Activated CD4-positive, alpha-beta memory T cell treated with anti-CD3 and anti-CD28 coated beads for 36 hours (primary cell): ENCODE measurements at regions of chr2 and their contacts with region 1.

Region 1: DNA sequence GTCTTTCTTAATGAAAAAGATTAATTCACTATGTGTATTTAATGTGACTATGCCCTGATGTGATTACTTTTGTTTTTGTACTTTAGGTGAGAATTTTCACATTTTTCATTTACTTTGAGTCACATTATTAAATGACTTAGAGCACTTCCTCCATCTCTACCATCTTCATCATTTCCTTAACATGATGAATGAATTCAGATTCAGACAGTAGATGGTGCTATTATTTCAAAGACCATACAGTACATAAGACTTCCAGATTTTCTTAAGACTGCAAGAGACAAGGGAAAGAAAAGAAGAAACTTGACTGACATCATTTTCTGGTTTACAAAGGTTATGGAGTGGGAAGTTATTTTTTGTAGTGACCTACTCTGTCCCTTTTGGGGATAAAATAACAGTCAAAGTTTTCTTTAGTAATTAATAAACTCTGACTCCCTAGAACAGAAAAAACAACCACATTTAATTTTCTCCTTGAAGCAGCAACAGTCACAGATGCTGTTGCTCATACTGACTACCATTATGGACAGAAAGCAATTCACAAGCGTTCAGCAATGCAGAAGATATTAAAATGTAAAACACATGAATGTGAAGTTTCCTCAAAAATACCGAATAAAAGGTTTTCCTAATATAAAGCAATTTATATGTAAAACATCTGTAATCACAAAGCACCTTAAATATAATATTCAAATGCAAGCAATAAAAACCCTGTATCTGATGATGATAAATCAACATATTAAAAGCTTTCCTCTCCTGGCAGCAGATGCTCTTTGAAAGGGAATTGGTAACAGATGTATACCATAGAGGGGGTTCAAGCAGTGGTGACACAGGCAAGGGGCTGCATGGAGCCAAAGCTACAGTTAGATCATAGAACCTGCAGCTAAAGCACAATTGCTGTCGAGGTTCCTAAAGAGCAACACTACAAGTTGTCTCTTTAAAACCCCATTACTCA is 1010.9 kb upstream of the NXPH2 start:
- DNase-seq: no peak
- H3K4me3 Mint-ChIP-seq: no peak overlapping the region
- H3K27ac Mint-ChIP-seq: no peak overlapping the region
- H3K4me1 Mint-ChIP-seq: no peaks in the 10 kb centered on the region
- H3K27me3 Mint-ChIP-seq: no peaks in the 10 kb centered on the region

Region 2: DNA sequence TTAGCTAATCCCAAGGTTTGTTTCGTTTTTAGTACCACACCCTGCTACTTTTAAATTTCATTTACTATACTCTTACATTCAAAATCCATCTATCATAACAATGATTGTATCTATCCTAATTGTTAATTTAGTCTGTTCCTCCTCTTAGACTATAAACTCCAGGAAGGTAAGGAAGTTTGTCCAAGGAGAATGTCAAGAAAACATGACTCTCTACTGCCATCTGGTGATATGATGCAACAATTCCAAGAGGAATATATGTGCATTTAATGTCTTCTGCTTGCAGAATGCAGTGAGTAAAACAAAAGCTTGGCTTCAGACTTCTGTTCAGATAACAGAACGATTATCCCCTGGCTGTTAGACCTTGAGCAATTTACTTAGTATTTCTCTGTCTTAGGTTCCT is 1072.6 kb after region 1 on chr2:
- CTCF ChIA-PET with region 1: no interaction called
- POLR2A ChIA-PET with region 1: no interaction called
- intact Hi-C with region 1: loop called (anchors 5 kb)
- DNase-seq: no peak
- H3K4me3 Mint-ChIP-seq: no peak overlapping the region
- H3K27ac Mint-ChIP-seq: no peak overlapping the region
- H3K4me1 Mint-ChIP-seq: no peaks in the 10 kb centered on the region
- H3K27me3 Mint-ChIP-seq: no peaks in the 10 kb centered on the region